ENCODE measurements at regions of chr7 and their contacts with region 1.

Region 1: GRCh38 chr7:30226614-30227268 is 57.7 kb upstream of the ZNRF2 start:
- DNase-seq: peak in 3 of 14 experiments; percentile 20 to 40 (median 23)
- ATAC-seq: no peak
- H3K4me3 ChIP-seq: no peak overlapping the region
- H3K4me3 Mint-ChIP-seq: no peak overlapping the region
- H3K27ac ChIP-seq: no peak overlapping the region
- H3K27ac Mint-ChIP-seq: no peak overlapping the region
- H3K4me1 ChIP-seq: no peaks in the 10 kb centered on the region
- H3K4me1 Mint-ChIP-seq: no peaks in the 10 kb centered on the region
- H3K27me3 ChIP-seq: no peaks in the 10 kb centered on the region
- H3K27me3 Mint-ChIP-seq: no peaks in the 10 kb centered on the region
- CTCF ChIP-seq: no peak

Region 2: GRCh38 chr7:30184791-30185487 is 41.8 kb before region 1 on chr7:
- CTCF ChIA-PET with region 1: no interaction called
- POLR2A ChIA-PET with region 1: no interaction called
- intact Hi-C with region 1: loop called in 1 of 2 experiments (anchors 1 kb)
- DNase-seq: peak in 3 of 14 experiments; percentile 21 to 70 (median 58)
- ATAC-seq: no peak
- H3K4me3 ChIP-seq: no peak overlapping the region
- H3K4me3 Mint-ChIP-seq: no peak overlapping the region
- H3K27ac ChIP-seq: no peak overlapping the region
- H3K27ac Mint-ChIP-seq: no peak overlapping the region
- H3K4me1 ChIP-seq: no peaks in the 10 kb centered on the region
- H3K4me1 Mint-ChIP-seq: no peaks in the 10 kb centered on the region
- H3K27me3 ChIP-seq: no peaks in the 10 kb centered on the region
- H3K27me3 Mint-ChIP-seq: no peaks in the 10 kb centered on the region
- CTCF ChIP-seq: no peak